MCF 10A (cell line): ENCODE measurements at regions of chr15 and their contacts with region 1.

Region 1: GRCh38 chr15:81400640-81401236 is 26.7 kb upstream of the TMC3 start:
- DNase-seq: peak; percentile 63
- H3K4me3 Mint-ChIP-seq: no peak overlapping the region
- H3K27ac Mint-ChIP-seq: no peak overlapping the region
- H3K4me1 Mint-ChIP-seq: peaks cover 9% of the 10 kb centered on the region
- H3K27me3 Mint-ChIP-seq: no peaks in the 10 kb centered on the region
- CTCF ChIP-seq: peak; percentile 77

Region 2: DNA sequence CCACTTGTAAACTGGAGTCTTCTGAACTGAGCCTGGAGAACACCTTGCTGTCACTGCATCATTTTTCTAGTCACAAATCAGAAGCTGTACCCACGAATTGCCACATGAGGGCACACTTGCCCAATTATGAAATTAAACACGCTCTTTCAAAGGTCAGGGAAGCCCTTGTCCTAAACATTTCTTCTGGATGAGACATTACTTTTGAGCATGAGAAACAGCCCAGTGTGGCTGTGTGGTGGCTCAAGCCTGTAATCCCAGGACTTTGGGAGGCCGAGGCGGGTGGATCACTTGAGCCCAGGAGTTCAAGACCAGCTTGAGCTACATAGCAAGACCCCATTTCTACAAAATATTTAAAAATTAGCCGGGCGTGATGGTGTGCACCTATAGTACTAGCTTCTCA is 294.2 kb before region 1 on chr15:
- CTCF ChIA-PET with region 1: interaction called, 4 read pairs
- POLR2A ChIA-PET with region 1: no interaction called
- intact Hi-C with region 1: loop called (anchors 5 kb)
- DNase-seq: peak; percentile 76
- H3K4me3 Mint-ChIP-seq: no peak overlapping the region
- H3K27ac Mint-ChIP-seq: no peak overlapping the region
- H3K4me1 Mint-ChIP-seq: peaks cover 23% of the 10 kb centered on the region
- H3K27me3 Mint-ChIP-seq: no peaks in the 10 kb centered on the region
- CTCF ChIP-seq: peak; percentile 75

Region 3: GRCh38 chr15:81256916-81257315 is 143.8 kb before region 1 on chr15:
- CTCF ChIA-PET with region 1: interaction called, 10 read pairs
- POLR2A ChIA-PET with region 1: no interaction called
- intact Hi-C with region 1: no loop called
- DNase-seq: peak; percentile 45
- H3K4me3 Mint-ChIP-seq: no peak overlapping the region
- H3K27ac Mint-ChIP-seq: no peak overlapping the region
- H3K4me1 Mint-ChIP-seq: peaks cover 18% of the 10 kb centered on the region
- H3K27me3 Mint-ChIP-seq: no peaks in the 10 kb centered on the region
- CTCF ChIP-seq: peak; percentile 54

Region 4: GRCh38 chr15:81296673-81297072 is 104.1 kb before region 1 on chr15:
- CTCF ChIA-PET with region 1: interaction called, 11 read pairs
- POLR2A ChIA-PET with region 1: interaction called, 3 read pairs
- intact Hi-C with region 1: no loop called
- DNase-seq: peak; percentile 48
- H3K4me3 Mint-ChIP-seq: no peak overlapping the region
- H3K27ac Mint-ChIP-seq: no peak overlapping the region
- H3K4me1 Mint-ChIP-seq: peaks cover 22% of the 10 kb centered on the region
- H3K27me3 Mint-ChIP-seq: no peaks in the 10 kb centered on the region
- CTCF ChIP-seq: no peak

Region 5: GRCh38 chr15:81357223-81357622 is 43.5 kb before region 1 on chr15:
- CTCF ChIA-PET with region 1: interaction called, 14 read pairs
- POLR2A ChIA-PET with region 1: no interaction called
- intact Hi-C with region 1: no loop called
- DNase-seq: peak; percentile 11
- H3K4me3 Mint-ChIP-seq: no peak overlapping the region
- H3K27ac Mint-ChIP-seq: no peak overlapping the region
- H3K4me1 Mint-ChIP-seq: peaks cover 6% of the 10 kb centered on the region
- H3K27me3 Mint-ChIP-seq: no peaks in the 10 kb centered on the region
- CTCF ChIP-seq: no peak

Region 6: DNA sequence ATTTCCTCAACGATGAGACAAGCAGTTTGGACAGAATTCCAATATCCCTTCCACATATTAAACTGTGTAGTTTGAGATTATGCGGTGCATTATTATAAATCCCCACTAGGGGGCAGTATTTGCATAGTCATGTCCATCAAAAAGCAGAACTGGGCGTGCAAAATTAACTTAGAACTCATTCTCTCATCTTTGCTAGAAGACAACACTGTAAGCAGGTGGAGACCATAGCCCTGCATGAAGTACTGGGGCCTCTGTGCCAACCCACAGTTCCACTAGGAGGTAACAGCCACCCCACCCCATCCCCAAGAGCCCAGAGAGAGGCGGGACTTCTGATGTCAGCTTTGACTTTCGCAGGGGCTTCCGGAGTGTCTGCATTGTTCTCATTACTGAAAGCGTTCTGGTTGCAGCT is 79.9 kb after region 1 on chr15:
- CTCF ChIA-PET with region 1: no interaction called
- POLR2A ChIA-PET with region 1: no interaction called
- intact Hi-C with region 1: no loop called
- DNase-seq: peak; percentile 62
- H3K4me3 Mint-ChIP-seq: no peak overlapping the region
- H3K27ac Mint-ChIP-seq: no peak overlapping the region
- H3K4me1 Mint-ChIP-seq: no peaks in the 10 kb centered on the region
- H3K27me3 Mint-ChIP-seq: no peaks in the 10 kb centered on the region
- CTCF ChIP-seq: peak; percentile 79